AG04449 (cell line): ENCODE measurements at regions of chr11 and their contacts with region 1.

Region 1: GRCh38 chr11:109853156-109853776 is 239.9 kb upstream of the ZC3H12C start:
- DNase-seq: peak; percentile 40
- H3K4me3 ChIP-seq: no peak overlapping the region
- CTCF ChIP-seq: peak; percentile 43

Region 2: GRCh38 chr11:109939166-109939810 is 86.0 kb after region 1 on chr11:
- CTCF ChIA-PET with region 1: interaction called, 85 read pairs
- POLR2A ChIA-PET with region 1: no interaction called
- DNase-seq: peak; percentile 49
- H3K4me3 ChIP-seq: no peak overlapping the region
- CTCF ChIP-seq: peak; percentile 53

Region 3: DNA sequence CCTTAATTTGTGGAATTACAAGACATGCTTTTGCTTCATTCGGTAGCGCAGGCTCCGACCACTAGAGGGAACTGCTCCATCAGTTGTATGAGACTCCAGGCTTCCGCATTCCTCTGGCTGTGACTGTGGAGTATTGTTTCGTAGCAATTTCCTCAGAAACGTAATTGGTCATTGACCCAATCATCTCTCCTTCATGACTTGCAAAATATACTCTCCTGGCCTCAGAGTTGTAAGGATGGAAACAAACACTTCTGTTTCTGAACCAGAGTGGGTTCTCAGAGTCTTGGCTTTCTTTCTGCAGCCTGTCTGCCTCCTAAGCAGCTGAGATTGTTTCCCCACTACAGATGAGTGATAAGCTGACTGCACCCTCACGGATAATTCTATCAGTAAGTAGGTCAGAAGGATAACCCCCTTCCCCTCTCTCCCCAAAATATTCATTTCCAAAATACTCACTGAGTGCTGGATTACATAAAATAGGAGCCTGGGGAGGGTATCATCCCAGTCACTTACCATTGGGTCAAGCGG is 93.1 kb after region 1 on chr11:
- CTCF ChIA-PET with region 1: interaction called, 85 read pairs
- POLR2A ChIA-PET with region 1: no interaction called
- DNase-seq: peak; percentile 80
- H3K4me3 ChIP-seq: no peak overlapping the region; the same call in 1 of the 2 replicates
- CTCF ChIP-seq: peak; percentile 84